T-cell (primary cell): ENCODE measurements at regions of chr5 and their contacts with region 1.

Region 1: DNA sequence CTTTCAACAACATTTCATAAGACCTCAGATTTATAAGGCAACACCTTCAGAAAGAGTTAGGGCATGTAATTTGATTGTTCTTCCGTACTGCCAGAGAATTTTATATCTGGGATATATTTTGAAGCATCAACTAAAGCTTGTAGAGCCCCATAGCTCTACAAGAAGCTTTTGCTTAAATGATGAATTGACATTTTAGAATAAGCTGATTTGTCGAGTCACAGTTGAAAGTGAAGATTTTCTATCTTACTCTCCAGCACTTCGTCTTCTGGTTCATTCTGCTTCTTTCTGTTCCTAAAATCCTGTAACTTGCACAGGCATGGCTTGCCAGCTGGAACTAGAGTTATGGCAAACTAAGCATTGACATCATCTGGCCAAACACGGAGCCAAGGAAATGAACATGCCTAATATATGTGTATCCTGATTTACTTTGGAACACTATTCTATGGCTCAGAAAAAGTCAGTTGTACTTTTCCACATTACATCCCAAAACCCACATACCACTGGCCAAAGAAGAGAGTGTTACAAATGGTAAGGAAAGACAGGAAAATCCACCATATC is 68.6 kb upstream of the MAST4 start:
- DNase-seq: no peak
- ATAC-seq: no peak
- H3K4me3 ChIP-seq: no peak overlapping the region
- H3K4me3 Mint-ChIP-seq: no peak overlapping the region
- H3K27ac ChIP-seq: no peak overlapping the region
- H3K27ac Mint-ChIP-seq: no peak overlapping the region
- H3K4me1 ChIP-seq: no peaks in the 10 kb centered on the region
- H3K4me1 Mint-ChIP-seq: no peaks in the 10 kb centered on the region
- H3K27me3 ChIP-seq: no peaks in the 10 kb centered on the region
- H3K27me3 Mint-ChIP-seq: peaks cover 11% of the 10 kb centered on the region in 2 donors

Region 2: GRCh38 chr5:67855523-67855922 is 1328.0 kb after region 1 on chr5:
- CTCF ChIA-PET with region 1: no interaction called
- POLR2A ChIA-PET with region 1: interaction called in 1 of 2 experiments, 10 read pairs
- DNase-seq: no peak
- ATAC-seq: no peak
- H3K4me3 ChIP-seq: no peak overlapping the region
- H3K4me3 Mint-ChIP-seq: no peak overlapping the region
- H3K27ac ChIP-seq: no peak overlapping the region
- H3K27ac Mint-ChIP-seq: no peak overlapping the region
- H3K4me1 ChIP-seq: no peaks in the 10 kb centered on the region
- H3K4me1 Mint-ChIP-seq: no peaks in the 10 kb centered on the region
- H3K27me3 ChIP-seq: no peaks in the 10 kb centered on the region
- H3K27me3 Mint-ChIP-seq: no peaks in the 10 kb centered on the region